ENCODE measurements at regions of chr1 and their contacts with region 1.

Region 1: GRCh38 chr1:150552093-150552691 is 3.0 kb downstream of the ADAMTSL4 start:
- DNase-seq: peak; percentile 89 to 97 (median 90)
- H3K4me3 ChIP-seq: no peak overlapping the region
- H3K27ac ChIP-seq: peak overlapping the region; percentile 85 to 89
- H3K4me1 ChIP-seq: peaks cover 16% of the 10 kb centered on the region
- H3K27me3 ChIP-seq: no peaks in the 10 kb centered on the region
- CTCF ChIP-seq: no peak
- EP300 ChIP-seq: peak; percentile 97
- POLR2A ChIP-seq: peak; percentile 43

Region 2: DNA sequence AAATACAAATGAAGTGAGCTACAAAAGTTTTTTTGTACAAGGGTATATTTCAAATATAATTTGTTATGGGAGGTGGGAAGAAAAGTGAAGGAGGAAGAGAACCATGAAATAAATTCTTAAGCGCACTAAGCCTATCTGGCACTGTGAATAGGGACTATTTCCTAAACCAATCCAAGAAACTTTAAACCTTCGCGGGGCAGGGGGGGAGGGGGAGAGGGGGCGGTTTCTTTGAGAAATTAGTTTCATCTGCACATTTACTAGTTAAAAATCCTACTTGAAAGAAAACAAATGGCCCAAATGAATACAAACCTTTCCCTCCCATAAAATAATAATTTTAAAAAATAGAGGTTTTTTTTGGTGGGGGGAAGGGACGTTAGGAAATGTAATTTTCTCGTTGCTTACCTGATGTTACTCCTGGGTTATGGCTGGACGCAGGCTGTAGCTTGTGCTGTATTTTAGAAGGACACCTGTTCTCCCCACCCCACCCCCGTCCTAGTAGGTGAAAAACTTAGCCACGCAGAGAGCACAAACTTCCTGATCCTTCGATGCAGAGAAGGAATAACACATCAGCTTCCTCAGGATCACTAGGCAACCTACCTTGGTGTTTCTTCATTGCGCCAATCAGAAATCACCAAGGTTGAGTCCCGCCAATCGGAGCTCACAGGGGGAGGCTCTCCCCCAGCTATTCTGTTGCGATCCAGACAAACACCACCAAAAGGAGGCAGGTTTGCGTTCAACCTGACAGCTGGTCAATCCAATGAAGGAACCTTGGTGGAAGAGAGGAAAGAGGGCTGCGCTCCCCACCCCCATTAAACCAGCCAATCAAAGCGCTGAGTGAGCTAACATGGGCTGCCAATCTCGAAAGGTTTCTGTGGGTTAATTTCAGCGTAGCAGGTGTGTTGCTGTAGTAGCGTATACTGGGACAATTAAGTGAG is 144.7 kb after region 1 on chr1 and contains the start of gene GOLPH3L:
- intact Hi-C with region 1: loop called in 1 of 4 experiments (anchors 10 kb)
- DNase-seq: peak; percentile 89 to 95 (median 89)
- H3K4me3 ChIP-seq: peak within 1 kb of the TSS; percentile 56
- H3K27ac ChIP-seq: peak within 1 kb of the TSS in 1 of 2 donors; percentile 43
- H3K4me1 ChIP-seq: no peaks in the 10 kb centered on the region
- H3K27me3 ChIP-seq: no peaks in the 10 kb centered on the region
- CTCF ChIP-seq: peak in 1 of 3 donors; percentile 45
- EP300 ChIP-seq: no peak
- POLR2A ChIP-seq: peak; percentile 70
- total RNA-seq, gene GOLPH3L: 20.0 to 43.2 (median 29.9) TPM

Region 3: GRCh38 chr1:150813058-150813707 is 261.0 kb after region 1 on chr1:
- intact Hi-C with region 1: loop called in 1 of 4 experiments (anchors 10 kb)
- DNase-seq: peak; percentile 42 to 68 (median 55)
- H3K4me3 ChIP-seq: no peak overlapping the region
- H3K27ac ChIP-seq: no peak overlapping the region
- H3K4me1 ChIP-seq: peaks cover 4% of the 10 kb centered on the region
- H3K27me3 ChIP-seq: no peaks in the 10 kb centered on the region
- CTCF ChIP-seq: peak in 2 of 3 donors; percentile 29 to 33
- EP300 ChIP-seq: no peak
- POLR2A ChIP-seq: no peak